ENCODE measurements at regions of chr1 and their contacts with region 1.

Region 1: GRCh38 chr1:229341774-229342655 is 832 bp downstream of the CCSAP start:
- DNase-seq: peak; percentile 82 to 91
- H3K4me3 ChIP-seq: peak overlapping the region; percentile 68 to 99
- H3K27ac ChIP-seq: peak overlapping the region; percentile 88 to 99
- H3K4me1 ChIP-seq: peaks cover 0 to 25% (median 14%) of the 10 kb centered on the region in 4 donors
- H3K27me3 ChIP-seq: peaks cover 0 to 6% of the 10 kb centered on the region in 2 donors
- CTCF ChIP-seq: no peak

Region 2: GRCh38 chr1:229270547-229271447 is 71.2 kb before region 1 on chr1 and contains the start of gene RAB4A:
- intact Hi-C with region 1: loop called (anchors 5 kb)
- DNase-seq: peak; percentile 69 to 88
- H3K4me3 ChIP-seq: peak within 1 kb of the TSS; percentile 73 to 85
- H3K27ac ChIP-seq: peak within 1 kb of the TSS; percentile 74 to 83
- H3K4me1 ChIP-seq: peaks cover 0 to 48% (median 31%) of the 10 kb centered on the region in 4 donors
- H3K27me3 ChIP-seq: no peaks in the 10 kb centered on the region
- CTCF ChIP-seq: peak in 1 of 2 experiments; percentile 8

Region 3: GRCh38 chr1:229430761-229431283 is 88.8 kb after region 1 on chr1:
- intact Hi-C with region 1: loop called (anchors 10 kb)
- DNase-seq: peak in 1 of 2 donors; percentile 53
- H3K4me3 ChIP-seq: no peak overlapping the region
- H3K27ac ChIP-seq: no peak overlapping the region
- H3K4me1 ChIP-seq: peaks cover 0 to 47% (median 41%) of the 10 kb centered on the region in 4 donors
- H3K27me3 ChIP-seq: peaks cover 0 to 73% of the 10 kb centered on the region in 2 donors
- CTCF ChIP-seq: no peak